ENCODE measurements at regions of chr15 and their contacts with region 1.

Region 1: DNA sequence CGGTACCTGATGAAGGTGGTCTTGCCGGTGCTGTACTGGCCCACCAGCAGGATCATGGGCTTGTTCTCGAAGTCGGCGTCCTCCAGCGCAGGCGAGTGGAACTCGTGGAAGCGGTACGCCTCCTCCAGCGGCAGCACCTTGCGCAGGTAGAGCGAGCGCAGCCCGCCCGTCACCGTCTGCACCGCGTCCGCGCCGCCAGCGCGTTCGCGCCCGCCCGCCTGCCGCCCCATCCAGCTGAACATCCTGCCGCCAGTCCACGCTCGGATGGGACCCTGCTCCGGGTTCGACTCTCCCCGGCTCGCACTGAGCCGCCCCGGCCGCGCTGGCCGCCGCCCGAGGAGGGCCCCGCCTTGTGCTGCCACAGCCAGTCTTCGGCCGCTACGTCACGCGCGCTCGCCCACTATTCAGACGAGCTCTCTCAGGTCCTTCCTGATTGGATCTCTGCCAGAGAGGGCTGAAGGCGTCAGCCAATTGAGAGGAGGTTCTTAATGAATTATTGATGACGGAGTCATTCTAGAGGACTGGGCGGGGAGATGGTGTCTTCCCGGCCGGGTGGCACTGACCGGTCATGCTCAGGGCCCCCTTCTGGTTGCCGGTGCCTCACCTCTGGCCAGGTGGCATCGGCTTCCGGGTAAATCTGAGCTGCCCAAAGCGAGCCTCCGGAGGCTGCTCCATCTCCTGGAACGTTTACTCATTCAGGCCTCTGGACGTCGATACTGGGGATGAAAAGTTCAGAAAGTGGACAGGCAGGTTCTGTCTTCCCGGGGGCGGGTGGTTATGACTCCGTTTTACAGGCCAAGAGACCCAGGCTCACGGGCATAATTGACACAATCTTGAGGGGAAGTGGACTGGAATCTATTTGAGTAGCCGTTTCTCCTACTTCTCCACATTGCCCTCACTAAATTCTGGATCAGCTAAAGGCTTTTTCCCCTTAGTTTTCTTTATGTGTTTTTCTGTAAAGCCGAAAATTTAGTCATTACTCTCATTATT is at the start of gene EHD4:
- DNase-seq: peak; percentile 92
- ATAC-seq: peak; percentile 91
- H3K4me3 Mint-ChIP-seq: peak within 1 kb of the TSS; percentile 88
- H3K27ac Mint-ChIP-seq: peak within 1 kb of the TSS; percentile 90
- H3K4me1 Mint-ChIP-seq: peaks cover 35% of the 10 kb centered on the region
- H3K27me3 Mint-ChIP-seq: peaks cover 33% of the 10 kb centered on the region
- total RNA-seq, gene EHD4: 8.4 to 9.5 TPM

Region 2: DNA sequence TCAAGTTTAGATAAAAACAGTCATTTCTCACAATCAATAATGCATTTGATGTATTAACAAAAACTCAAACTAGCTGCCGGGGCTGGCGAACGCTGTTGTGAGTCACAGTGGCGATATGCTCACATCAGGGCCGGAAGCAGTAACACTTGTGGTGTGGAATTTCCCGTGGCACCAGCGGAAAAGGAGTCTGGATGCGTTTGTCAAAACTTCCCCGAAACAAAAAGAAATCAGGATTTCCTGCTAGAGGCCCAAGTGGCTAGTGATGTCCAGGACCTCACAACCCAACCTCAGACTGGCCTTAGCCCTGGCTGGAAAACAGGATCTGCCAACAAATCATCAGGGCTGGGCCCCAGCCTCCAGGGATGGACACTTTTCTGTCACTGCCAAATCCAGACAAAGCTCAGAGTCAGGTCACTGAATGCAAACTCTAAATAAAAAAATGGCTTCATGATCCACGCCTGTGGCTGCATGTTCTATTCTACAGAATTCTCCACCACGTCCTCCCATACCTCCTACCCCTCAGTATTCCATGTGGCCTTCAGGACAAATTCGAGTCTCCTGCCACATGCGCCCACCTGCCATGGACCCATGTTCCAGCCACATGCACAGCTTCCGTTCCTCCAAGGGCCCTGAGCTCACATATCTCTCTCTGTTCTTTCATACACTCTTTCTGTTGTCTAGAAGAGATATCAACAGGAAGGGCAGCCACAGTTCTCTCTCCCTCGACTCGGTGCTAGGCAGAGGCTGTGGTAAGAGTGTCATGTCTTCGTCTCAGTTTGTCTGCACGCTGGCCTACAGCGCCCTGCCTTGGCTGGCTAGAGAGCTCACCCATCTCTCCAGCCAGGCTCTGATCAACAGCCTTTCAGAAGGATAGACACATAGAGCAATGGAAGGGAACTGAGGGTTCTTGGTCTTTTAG is 35.6 kb before region 1 on chr15:
- POLR2A ChIA-PET with region 1: interaction called, 30 read pairs
- DNase-seq: peak; percentile 60
- ATAC-seq: peak; percentile 90
- H3K4me3 Mint-ChIP-seq: peak overlapping the region; percentile 83
- H3K27ac Mint-ChIP-seq: peak overlapping the region; percentile 99
- H3K4me1 Mint-ChIP-seq: peaks cover 41% of the 10 kb centered on the region
- H3K27me3 Mint-ChIP-seq: no peaks in the 10 kb centered on the region